Common myeloid progenitor, CD34-positive (primary cell): ENCODE measurements at regions of chr7 and their contacts with region 1.

Region 1: GRCh38 chr7:85030893-85031292 is 156.0 kb downstream of the SEMA3D start:
- DNase-seq: peak; percentile 31 to 54 (median 42)
- H3K4me3 ChIP-seq: no peak overlapping the region
- H3K27ac ChIP-seq: no peak overlapping the region
- H3K4me1 ChIP-seq: no peaks in the 10 kb centered on the region
- H3K27me3 ChIP-seq: no peaks in the 10 kb centered on the region

Region 2: DNA sequence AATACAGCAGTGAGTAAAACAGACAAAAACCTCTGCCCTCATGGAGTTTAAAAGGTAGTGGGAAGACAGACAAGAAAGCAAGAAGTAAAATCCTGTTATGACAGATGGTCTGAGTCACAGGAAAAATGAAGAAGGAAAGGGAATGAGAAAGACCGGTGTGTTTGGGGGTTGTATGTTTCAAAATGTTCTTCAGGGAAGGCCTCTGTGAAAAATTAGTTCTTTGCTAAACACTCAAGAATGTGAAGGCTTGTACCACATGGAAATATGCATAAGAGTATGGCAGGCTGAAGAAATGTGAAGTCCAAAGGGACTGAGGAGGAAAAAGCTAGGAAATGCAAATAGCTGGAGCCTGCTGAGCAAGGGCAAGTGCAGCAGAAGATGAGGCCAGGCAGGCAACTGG is 520.4 kb before region 1 on chr7:
- CTCF ChIA-PET with region 1: no interaction called
- POLR2A ChIA-PET with region 1: no interaction called
- DNase-seq: no peak
- H3K4me3 ChIP-seq: no peak overlapping the region
- H3K27ac ChIP-seq: no peak overlapping the region
- H3K4me1 ChIP-seq: no peaks in the 10 kb centered on the region
- H3K27me3 ChIP-seq: no peaks in the 10 kb centered on the region

Region 3: DNA sequence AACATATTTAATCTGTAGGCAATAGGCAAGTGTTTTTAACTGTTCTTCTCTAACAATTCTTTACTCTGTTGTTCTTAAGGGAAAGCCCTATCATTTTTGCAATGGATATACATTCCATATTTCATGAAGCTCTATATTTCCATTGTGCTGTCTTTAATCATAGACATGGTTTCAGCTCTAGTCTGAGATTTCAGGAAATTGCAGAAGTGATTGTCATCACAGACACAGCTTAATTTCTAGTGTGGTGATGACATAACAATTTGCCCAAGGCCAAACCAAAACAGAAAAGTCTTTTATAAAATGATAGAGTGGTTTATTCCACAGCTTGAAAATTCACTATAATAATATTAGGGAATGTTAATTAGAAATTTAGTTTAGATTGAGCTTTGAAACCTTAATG is 342.2 kb before region 1 on chr7:
- CTCF ChIA-PET with region 1: no interaction called
- POLR2A ChIA-PET with region 1: no interaction called
- DNase-seq: peak in 2 of 3 donors; percentile 15 to 18
- H3K4me3 ChIP-seq: no peak overlapping the region
- H3K27ac ChIP-seq: no peak overlapping the region
- H3K4me1 ChIP-seq: no peaks in the 10 kb centered on the region
- H3K27me3 ChIP-seq: no peaks in the 10 kb centered on the region

Region 4: DNA sequence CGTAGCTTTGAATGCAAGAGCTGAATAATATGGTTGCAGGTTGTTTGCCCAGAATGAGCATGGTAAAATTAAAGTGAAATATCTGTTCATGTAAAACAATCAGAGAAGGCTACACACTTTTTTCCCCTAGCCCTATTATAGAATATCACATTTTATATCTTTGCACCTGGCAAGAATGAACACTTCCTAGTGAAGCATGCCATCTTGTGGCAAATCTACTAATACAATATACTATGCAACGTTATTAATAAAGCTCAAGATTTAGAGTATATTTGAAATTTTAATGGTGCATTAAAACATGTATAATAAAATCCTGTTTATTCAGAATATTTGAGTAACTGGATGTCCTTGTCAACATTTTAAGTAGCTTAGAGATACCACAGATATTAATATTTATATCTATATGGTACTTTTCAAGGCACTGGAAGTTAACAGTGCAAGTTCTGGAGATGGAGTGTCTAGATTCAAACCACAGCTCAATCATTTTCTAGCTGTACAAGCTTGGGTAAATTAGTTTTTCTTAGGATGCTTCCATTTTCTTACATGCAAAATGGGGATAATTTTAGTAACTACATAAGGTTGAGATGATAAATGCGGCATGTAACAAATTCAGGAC is 799.0 kb after region 1 on chr7:
- CTCF ChIA-PET with region 1: interaction called, 35 read pairs
- POLR2A ChIA-PET with region 1: no interaction called
- DNase-seq: peak; percentile 2 to 32 (median 24)
- H3K4me3 ChIP-seq: no peak overlapping the region
- H3K27ac ChIP-seq: no peak overlapping the region
- H3K4me1 ChIP-seq: no peaks in the 10 kb centered on the region
- H3K27me3 ChIP-seq: no peaks in the 10 kb centered on the region